Thyroid gland (tissue), 4 donors: ENCODE measurements at regions of chr4 and their contacts with region 1.

Region 1: DNA sequence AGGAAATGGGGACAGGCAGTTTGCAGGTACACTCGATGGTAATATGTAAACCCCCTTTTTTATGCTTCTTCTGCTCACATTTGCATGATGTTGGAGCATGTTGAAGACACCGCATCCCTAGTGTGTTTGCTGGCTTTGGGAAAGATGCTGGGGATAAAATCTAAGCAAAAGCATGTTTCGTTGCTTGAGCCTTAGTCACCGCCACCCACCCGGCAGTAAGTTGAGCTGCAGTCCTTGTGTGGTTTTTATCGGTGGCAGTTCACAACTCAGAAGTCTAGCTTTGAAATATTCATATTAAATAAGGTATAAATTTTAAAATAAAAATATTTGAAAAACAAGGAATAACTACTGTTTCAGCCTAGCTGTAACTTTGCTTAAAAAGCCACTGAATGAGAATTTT is 21.7 kb upstream of the MND1 start:
- DNase-seq: no peak
- H3K4me3 ChIP-seq: no peak overlapping the region
- H3K27ac ChIP-seq: no peak overlapping the region
- H3K4me1 ChIP-seq: no peaks in the 10 kb centered on the region
- H3K27me3 ChIP-seq: no peaks in the 10 kb centered on the region
- CTCF ChIP-seq: no peak
- POLR2A ChIP-seq: no peak

Region 2: GRCh38 chr4:153142700-153143438 is 179.9 kb before region 1 on chr4:
- intact Hi-C with region 1: loop called (anchors 5 kb)
- DNase-seq: peak; percentile 90 to 94
- H3K4me3 ChIP-seq: no peak overlapping the region
- H3K27ac ChIP-seq: peak overlapping the region in 2 of 3 donors; percentile 13 to 67
- H3K4me1 ChIP-seq: peaks cover 0 to 10% of the 10 kb centered on the region in 2 donors
- H3K27me3 ChIP-seq: no peaks in the 10 kb centered on the region
- CTCF ChIP-seq: peak; percentile 49 to 94 (median 85)
- POLR2A ChIP-seq: no peak